Colonic mucosa (tissue), 4 donors: ENCODE measurements at regions of chr7 and their contacts with region 1.

Region 1: GRCh38 chr7:94449148-94449725 is 54.5 kb downstream of the COL1A2 start:
- DNase-seq: no peak
- H3K4me3 ChIP-seq: no peak overlapping the region
- H3K27ac ChIP-seq: no peak overlapping the region
- H3K4me1 ChIP-seq: no peaks in the 10 kb centered on the region
- H3K27me3 ChIP-seq: no peaks in the 10 kb centered on the region
- CTCF ChIP-seq: peak; percentile 59

Region 2: GRCh38 chr7:94250985-94251384 is 198.3 kb before region 1 on chr7:
- intact Hi-C with region 1: no loop called
- DNase-seq: no peak
- H3K4me3 ChIP-seq: no peak overlapping the region
- H3K27ac ChIP-seq: no peak overlapping the region
- H3K4me1 ChIP-seq: no peaks in the 10 kb centered on the region
- H3K27me3 ChIP-seq: no peaks in the 10 kb centered on the region
- CTCF ChIP-seq: no peak

Region 3: DNA sequence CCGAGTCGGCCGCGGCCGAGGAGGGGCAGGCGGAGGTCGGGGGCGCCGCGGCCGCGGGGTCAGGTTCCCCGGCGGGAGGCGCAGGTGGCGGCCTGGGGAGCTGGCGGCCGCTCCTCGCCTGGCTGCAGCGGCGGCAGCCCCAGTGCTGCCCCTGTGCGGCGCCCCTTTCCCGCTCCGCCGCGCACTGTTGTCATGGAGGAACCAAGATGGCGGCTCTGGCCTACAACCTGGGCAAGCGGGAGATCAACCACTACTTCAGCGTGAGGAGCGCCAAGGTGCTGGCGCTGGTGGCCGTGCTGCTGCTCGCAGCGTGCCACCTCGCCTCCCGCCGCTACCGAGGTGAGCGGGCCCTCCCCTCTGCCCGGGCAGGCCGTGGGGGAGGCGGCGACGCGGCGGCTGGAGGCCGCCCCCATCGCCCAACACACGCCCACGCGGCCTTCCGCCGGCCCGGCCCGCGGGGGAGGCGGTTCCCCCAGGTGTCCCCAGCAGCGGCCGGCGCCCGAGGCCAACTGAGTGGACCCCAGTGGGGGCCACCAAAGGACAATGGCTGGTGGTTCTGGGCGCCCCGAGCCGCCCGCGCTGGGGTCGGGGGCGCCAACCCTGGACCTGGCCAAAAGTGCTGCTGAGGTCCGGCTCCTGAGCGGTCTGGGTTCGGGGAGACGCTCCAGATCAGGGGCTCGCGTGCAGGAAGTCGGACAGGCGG is 60.8 kb after region 1 on chr7:
- intact Hi-C with region 1: loop called (anchors 10 kb)
- DNase-seq: peak; percentile 70
- H3K4me3 ChIP-seq: peak overlapping the region; percentile 88
- H3K27ac ChIP-seq: peak overlapping the region; percentile 96
- H3K4me1 ChIP-seq: peaks cover 12% of the 10 kb centered on the region
- H3K27me3 ChIP-seq: no peaks in the 10 kb centered on the region
- CTCF ChIP-seq: no peak

Region 4: GRCh38 chr7:94529516-94529915 is 80.3 kb after region 1 on chr7:
- intact Hi-C with region 1: loop called (anchors 10 kb)
- DNase-seq: no peak
- H3K4me3 ChIP-seq: no peak overlapping the region
- H3K27ac ChIP-seq: no peak overlapping the region
- H3K4me1 ChIP-seq: no peaks in the 10 kb centered on the region
- H3K27me3 ChIP-seq: no peaks in the 10 kb centered on the region
- CTCF ChIP-seq: no peak

Region 5: GRCh38 chr7:94649450-94649849 is 200.2 kb after region 1 on chr7:
- intact Hi-C with region 1: loop called (anchors 10 kb)
- DNase-seq: no peak
- H3K4me3 ChIP-seq: no peak overlapping the region
- H3K27ac ChIP-seq: no peak overlapping the region
- H3K4me1 ChIP-seq: no peaks in the 10 kb centered on the region
- H3K27me3 ChIP-seq: no peaks in the 10 kb centered on the region
- CTCF ChIP-seq: no peak

Region 6: DNA sequence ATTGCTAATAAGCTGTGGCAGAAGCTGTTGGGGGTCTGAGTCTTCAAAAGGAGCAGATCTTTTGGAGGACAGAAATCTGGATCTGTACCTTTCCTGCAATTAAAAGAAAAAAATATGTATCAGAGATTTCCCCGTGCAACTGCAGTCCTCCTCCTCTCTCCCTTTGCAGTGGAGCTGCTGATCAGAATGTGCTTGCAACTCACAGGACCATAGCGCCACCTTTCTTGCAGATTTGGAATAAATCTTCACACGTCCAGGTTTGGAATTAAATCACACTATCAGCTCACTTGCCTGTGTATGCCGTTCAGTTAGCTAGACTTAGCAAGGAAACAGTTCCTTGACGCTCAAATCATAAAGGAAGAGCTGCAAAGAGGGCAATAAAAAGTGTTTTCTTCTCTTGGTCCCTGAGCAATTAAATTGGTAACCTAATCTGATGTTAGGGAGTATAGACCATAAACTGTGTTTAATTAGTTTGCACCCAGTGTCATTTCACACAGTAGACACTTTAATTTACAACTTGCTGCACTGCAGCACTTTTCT is 797.7 kb after region 1 on chr7:
- intact Hi-C with region 1: loop called (anchors 10 kb)
- DNase-seq: peak; percentile 76
- H3K4me3 ChIP-seq: no peak overlapping the region
- H3K27ac ChIP-seq: no peak overlapping the region
- H3K4me1 ChIP-seq: no peaks in the 10 kb centered on the region
- H3K27me3 ChIP-seq: no peaks in the 10 kb centered on the region
- CTCF ChIP-seq: peak; percentile 77